HAP-1 (cell line): ENCODE measurements at regions of chr2 and their contacts with region 1.

Region 1: DNA sequence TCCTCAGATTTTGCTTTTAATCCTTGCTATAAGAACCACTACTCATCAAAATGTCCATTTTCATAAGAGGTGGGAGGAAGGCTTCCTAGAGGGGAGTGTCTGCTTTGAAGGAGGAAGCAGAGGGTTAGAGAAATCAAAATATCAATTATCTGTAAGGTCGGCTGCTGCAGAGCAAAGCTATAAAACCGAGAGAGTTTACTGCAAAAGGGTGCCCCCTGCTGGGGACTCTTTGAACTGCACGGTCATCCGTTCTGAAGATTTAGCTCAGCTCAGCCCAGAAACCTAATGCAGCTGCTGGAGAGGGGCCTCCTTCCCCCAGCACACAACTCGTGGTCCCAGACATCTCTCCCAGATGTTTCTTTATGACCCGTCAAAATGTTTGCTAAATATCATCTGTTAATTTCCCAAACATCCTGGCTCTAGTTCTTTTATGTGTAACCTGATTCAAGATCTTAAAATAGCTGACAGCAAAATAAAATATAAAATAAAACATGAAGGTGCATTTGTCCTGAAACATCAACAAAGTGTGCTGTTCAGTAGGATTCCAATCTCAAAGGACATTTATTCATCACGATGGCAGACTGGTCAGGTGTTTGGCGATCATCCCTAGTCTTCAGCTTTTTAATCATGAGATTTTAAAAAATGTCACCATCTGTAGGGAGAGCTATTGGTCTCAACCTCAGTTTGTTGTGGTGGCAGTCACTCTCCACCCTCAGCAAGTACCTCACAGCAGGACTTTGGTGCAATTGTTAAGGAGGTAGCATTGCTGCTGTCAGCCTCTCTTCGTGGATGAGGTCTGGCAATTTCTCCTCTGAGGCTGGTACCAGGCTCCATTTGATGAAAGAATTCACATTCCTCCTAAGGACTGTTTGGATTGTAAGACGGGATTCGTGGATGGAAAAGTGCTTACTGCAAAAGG is 185.9 kb downstream of the MTX2 start:
- DNase-seq: peak; percentile 69 to 92
- H3K4me3 ChIP-seq: no peak overlapping the region
- H3K4me1 ChIP-seq: peaks cover 7% of the 10 kb centered on the region; the same call in 1 of the 2 replicates
- H3K27me3 ChIP-seq: peaks cover 44% of the 10 kb centered on the region

Region 2: DNA sequence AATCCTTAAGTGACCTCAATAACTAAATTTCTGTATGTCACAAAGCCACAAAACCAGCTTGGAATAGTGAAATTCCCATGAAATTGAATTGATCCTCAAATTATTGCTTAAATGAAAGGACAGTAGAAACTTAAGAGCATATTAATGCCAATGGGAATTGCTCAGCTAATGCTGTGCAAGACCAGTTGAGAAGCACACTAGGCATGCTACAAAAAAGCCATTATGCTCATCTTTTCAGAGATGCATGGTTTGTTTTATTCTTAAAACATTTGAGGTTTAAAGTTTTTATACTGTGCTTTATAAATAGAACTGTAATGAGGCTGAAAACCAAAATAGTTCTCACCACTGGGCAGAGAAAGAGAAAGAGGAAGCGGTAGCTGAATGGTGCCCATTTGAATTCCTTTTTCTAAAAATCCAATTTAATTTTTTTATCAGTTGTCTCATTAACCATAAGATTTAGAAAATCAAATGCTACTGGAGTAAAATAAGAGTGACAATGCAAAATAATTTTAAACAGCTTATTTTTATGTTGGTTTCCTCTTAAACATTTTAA is 551.7 kb before region 1 on chr2:
- in situ Hi-C with region 1: no loop called
- DNase-seq: no peak
- H3K4me3 ChIP-seq: no peak overlapping the region
- H3K4me1 ChIP-seq: no peaks in the 10 kb centered on the region
- H3K27me3 ChIP-seq: 0 out of 2 replicates have a peak, but pooled peaks cover 4% of the 10 kb centered on the region

Region 3: GRCh38 chr2:176136374-176137251 is 318.5 kb before region 1 on chr2:
- in situ Hi-C with region 1: loop called (anchors 5 kb)
- DNase-seq: peak; percentile 66 to 68
- H3K4me3 ChIP-seq: peak overlapping the region; percentile 64
- H3K4me1 ChIP-seq: peaks cover 26% of the 10 kb centered on the region
- H3K27me3 ChIP-seq: no peaks in the 10 kb centered on the region

Region 4: DNA sequence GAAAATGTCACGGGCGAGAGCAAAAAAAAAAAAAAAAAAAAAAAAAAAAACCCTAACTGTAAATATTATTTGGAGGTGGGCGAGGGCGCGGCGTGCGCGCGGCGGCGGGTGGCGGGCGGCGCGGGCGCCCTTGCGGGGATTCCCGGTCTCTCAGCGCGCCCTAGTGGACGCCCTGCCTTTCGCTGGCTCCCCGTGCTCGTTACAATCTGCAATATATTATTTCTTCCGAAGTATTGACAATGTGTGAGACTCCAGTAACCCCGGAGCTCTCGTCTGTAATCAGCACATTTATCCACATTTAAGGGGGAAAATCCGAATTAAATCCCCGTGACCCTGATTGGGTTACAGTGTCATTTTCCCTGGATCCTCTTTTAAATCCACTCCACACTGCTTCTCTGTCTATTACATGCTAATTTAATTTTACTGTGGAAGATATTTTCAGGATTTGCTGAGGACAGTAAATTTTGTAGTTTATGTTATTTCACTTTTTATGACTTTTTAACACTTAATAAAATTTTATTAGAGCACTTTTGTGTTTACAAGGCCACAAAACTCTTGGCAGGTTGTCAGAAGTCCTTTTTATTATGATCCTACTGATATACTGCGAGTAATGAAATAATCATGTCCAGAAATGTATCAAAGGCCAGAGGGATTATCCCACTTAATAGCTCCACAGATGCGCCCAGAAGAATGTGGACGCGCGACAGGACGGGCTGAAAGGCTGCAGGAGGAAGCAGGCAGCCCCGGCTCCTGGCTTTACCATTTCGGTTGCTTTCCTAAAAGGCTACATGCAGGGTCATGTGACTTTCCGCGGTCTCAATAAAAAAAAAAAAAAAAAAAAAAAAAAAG is 183.2 kb after region 1 on chr2:
- in situ Hi-C with region 1: loop called (anchors 25 kb)
- DNase-seq: peak; percentile 51 to 79
- H3K4me3 ChIP-seq: peak overlapping the region; percentile 31
- H3K4me1 ChIP-seq: no peaks in the 10 kb centered on the region
- H3K27me3 ChIP-seq: peaks cover 63% of the 10 kb centered on the region